Activated CD4-positive, alpha-beta T cell treated with anti-CD3 and anti-CD28 coated beads, Interleukin-2, amount 10 ng/mL, durations not matched to agents 24 days and 14 days (primary cell): ENCODE measurements at regions of chr10 and their contacts with region 1.

Region 1: GRCh38 chr10:43436400-43437140 is at the start of gene ZNF487:
- DNase-seq: peak; percentile 98
- H3K4me3 Mint-ChIP-seq: peak within 1 kb of the TSS; percentile 95
- H3K27ac Mint-ChIP-seq: peak within 1 kb of the TSS; percentile 99
- H3K4me1 Mint-ChIP-seq: peaks cover 13% of the 10 kb centered on the region
- H3K27me3 Mint-ChIP-seq: no peaks in the 10 kb centered on the region
- total RNA-seq, gene ZNF487: 1.5 and 1.6 TPM in 2 replicates

Region 2: GRCh38 chr10:43420369-43421200 is 16.0 kb before region 1 on chr10:
- intact Hi-C with region 1: loop called (anchors 1 kb)
- DNase-seq: peak; percentile 95
- H3K4me3 Mint-ChIP-seq: peak overlapping the region; percentile 88
- H3K27ac Mint-ChIP-seq: peak overlapping the region; percentile 99
- H3K4me1 Mint-ChIP-seq: peaks cover 36% of the 10 kb centered on the region
- H3K27me3 Mint-ChIP-seq: no peaks in the 10 kb centered on the region